ENCODE measurements at regions of chrX and their contacts with region 1.

Region 1: DNA sequence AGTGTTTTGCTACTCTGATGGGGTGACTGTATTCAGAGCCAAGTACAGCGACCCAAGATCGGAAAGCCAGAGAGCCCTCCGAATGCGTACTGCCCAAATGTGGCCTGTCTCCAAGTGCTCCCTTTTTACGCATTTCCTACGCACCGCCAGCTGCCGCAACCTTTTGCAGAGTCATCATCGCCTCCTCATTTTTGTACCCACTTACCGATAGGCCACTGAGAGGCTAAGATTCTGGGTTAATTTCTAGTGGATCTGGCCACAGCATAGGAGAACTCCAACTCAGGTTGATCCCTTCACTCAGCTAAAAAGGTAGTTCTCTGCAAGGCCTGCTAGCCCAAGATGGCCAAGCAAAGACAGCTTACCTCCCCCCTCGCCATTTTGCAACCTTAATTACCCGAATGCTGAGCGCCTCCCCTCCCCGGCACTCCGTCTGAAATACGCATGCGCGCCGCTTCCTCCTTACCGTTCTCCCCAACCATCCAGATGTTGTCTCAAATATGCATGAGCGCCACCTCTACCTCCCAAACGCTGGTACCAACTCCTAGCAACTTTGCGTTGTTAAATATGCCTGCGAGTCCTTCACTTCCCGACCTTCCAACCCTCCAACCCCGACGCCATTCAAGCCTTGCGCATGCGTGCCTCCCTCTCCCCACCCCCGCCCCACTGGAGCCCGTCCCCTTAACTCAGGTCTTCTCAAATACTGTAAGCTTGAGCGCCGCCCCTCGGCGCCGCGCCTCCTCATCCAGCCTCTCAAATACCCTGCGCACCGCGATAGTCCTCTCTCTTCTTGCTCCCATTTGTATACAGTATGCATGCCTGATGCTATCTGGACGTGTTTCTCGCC is 11.8 kb upstream of the ZCCHC13 start:
- DNase-seq: peak; percentile 89 to 95 (median 91)
- ATAC-seq: peak; percentile 90
- H3K4me3 ChIP-seq: peak overlapping the region; percentile 63
- H3K27ac ChIP-seq: peak overlapping the region; percentile 99
- H3K4me1 ChIP-seq: peaks cover 0 to 7% of the 10 kb centered on the region in 2 experiments; a peak in 2 of 5 replicates
- H3K27me3 ChIP-seq: no peaks in the 10 kb centered on the region
- CTCF ChIP-seq: peak; percentile 44 to 57 (median 48); a peak in 5 of 6 replicates
- EP300 ChIP-seq: no peak
- POLR2A ChIP-seq: peak; percentile 88
- RAD21 ChIP-seq: 0 out of 4 replicates have a peak, but pooled peaks of 1 of the 2 experiments have one; percentile 15

Region 2: GRCh38 chrX:74133156-74133796 is 158.9 kb before region 1 on chrX:
- CTCF ChIA-PET with region 1: no interaction called
- POLR2A ChIA-PET with region 1: no interaction called
- in situ Hi-C with region 1: no loop called
- intact Hi-C with region 1: loop called (anchors 1 kb)
- DNase-seq: peak; percentile 39 to 56 (median 46)
- ATAC-seq: peak; percentile 87
- H3K4me3 ChIP-seq: no peak overlapping the region
- H3K27ac ChIP-seq: no peak overlapping the region
- H3K4me1 ChIP-seq: no peaks in the 10 kb centered on the region
- H3K27me3 ChIP-seq: no peaks in the 10 kb centered on the region
- CTCF ChIP-seq: peak; percentile 58 to 77 (median 59)
- EP300 ChIP-seq: no peak
- POLR2A ChIP-seq: no peak
- RAD21 ChIP-seq: peak; percentile 70 to 87

Region 3: DNA sequence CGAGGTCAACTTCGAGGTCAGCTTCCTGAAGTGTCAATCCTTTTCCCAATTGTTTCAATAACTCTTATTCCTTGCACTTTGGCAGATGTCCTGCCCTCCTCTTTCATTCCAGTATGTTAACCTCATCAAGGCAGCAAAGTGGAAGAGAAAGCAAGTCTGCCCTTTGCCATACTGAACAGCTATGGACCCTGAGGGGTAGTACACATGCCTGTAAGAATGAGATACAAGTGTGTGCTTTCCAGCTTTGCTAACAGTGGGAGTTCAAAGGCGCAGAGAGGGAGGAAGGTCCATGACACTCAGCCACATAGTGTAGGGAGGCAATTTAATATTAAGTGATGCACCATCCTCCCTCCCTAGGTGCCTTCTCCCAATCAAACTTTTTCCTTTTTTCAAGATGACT is 84.6 kb before region 1 on chrX:
- CTCF ChIA-PET with region 1: no interaction called
- POLR2A ChIA-PET with region 1: no interaction called
- in situ Hi-C with region 1: no loop called
- intact Hi-C with region 1: no loop called
- DNase-seq: no peak
- ATAC-seq: no peak
- H3K4me3 ChIP-seq: no peak overlapping the region
- H3K27ac ChIP-seq: no peak overlapping the region
- H3K4me1 ChIP-seq: no peaks in the 10 kb centered on the region
- H3K27me3 ChIP-seq: no peaks in the 10 kb centered on the region
- CTCF ChIP-seq: no peak
- EP300 ChIP-seq: no peak
- POLR2A ChIP-seq: no peak
- RAD21 ChIP-seq: no peak

Region 4: DNA sequence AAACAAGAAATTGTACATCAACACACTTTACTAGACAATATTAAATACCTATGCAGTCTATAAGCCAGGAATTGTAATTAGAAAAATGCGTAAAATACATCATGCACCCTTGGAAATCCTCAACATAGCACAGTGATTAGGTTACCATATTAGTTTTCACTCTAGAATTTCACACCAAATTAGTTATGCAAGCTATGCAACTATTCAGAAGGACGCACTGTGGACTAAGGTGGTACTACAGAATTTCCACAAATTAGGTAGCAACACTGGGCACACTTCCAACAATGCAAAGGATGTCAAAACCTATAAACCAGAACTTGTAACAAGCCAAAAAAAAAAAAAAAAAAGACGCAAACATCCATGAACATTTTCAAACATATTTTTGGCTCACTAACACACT is 59.3 kb before region 1 on chrX:
- CTCF ChIA-PET with region 1: no interaction called
- POLR2A ChIA-PET with region 1: no interaction called
- in situ Hi-C with region 1: no loop called
- intact Hi-C with region 1: loop called (anchors 10 kb)
- DNase-seq: peak in 3 of 4 experiments; percentile 10 to 38 (median 17)
- ATAC-seq: peak; percentile 75
- H3K4me3 ChIP-seq: no peak overlapping the region
- H3K27ac ChIP-seq: no peak overlapping the region
- H3K4me1 ChIP-seq: no peaks in the 10 kb centered on the region
- H3K27me3 ChIP-seq: no peaks in the 10 kb centered on the region
- CTCF ChIP-seq: no peak
- EP300 ChIP-seq: no peak
- POLR2A ChIP-seq: no peak
- RAD21 ChIP-seq: no peak

Region 5: DNA sequence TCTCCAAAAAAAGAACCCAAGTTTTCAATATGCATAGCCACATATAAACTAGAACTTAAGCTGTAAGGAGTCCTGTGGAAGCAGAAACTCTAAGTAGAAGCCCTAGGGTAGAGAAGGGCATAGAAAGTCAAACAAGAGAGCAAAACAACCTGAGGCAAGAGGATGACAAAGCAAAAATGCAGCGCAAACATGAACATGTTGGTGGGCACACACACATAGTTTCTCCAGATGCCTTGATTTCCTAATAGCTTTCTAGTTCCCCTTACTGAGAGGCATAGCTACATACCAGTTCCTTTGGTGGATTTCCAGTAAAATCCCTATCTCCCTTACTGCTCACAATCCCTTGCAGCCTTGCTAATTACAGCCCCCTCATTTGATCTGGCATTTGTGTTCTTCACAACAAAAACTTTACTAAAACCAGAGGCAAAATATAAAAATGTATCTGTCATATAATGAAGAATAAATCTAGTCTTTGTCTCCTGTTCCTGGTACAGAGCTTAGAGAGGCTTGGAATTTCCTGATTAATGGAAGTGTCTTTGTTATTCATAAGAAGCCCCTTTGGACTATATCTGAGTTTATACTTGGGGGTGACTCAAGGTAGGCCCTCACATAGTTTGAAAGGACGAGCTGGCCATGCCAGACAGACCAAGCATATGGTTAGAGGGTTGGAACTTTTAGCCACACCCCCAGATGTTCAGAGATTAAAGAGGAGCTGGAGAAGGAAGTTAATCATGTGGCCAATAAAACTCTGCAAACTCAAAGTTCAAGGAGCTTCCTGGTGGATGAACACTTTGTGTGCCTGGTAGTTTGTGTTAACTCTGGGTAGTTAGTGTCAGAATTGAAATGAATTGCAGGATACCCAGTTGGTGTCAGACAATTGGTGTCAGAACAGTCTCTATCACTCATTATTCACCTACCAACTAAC is 40.9 kb before region 1 on chrX:
- CTCF ChIA-PET with region 1: no interaction called
- POLR2A ChIA-PET with region 1: no interaction called
- in situ Hi-C with region 1: no loop called
- intact Hi-C with region 1: loop called (anchors 2 kb)
- DNase-seq: peak in 2 of 4 experiments; percentile 6 to 27
- ATAC-seq: peak; percentile 60
- H3K4me3 ChIP-seq: no peak overlapping the region
- H3K27ac ChIP-seq: peak overlapping the region; percentile 50; the same call in 1 of the 3 replicates
- H3K4me1 ChIP-seq: peaks cover 4 to 14% of the 10 kb centered on the region in 2 experiments; a peak in 3 of 5 replicates
- H3K27me3 ChIP-seq: no peaks in the 10 kb centered on the region
- CTCF ChIP-seq: no peak
- EP300 ChIP-seq: no peak
- POLR2A ChIP-seq: no peak
- RAD21 ChIP-seq: no peak

Region 6: DNA sequence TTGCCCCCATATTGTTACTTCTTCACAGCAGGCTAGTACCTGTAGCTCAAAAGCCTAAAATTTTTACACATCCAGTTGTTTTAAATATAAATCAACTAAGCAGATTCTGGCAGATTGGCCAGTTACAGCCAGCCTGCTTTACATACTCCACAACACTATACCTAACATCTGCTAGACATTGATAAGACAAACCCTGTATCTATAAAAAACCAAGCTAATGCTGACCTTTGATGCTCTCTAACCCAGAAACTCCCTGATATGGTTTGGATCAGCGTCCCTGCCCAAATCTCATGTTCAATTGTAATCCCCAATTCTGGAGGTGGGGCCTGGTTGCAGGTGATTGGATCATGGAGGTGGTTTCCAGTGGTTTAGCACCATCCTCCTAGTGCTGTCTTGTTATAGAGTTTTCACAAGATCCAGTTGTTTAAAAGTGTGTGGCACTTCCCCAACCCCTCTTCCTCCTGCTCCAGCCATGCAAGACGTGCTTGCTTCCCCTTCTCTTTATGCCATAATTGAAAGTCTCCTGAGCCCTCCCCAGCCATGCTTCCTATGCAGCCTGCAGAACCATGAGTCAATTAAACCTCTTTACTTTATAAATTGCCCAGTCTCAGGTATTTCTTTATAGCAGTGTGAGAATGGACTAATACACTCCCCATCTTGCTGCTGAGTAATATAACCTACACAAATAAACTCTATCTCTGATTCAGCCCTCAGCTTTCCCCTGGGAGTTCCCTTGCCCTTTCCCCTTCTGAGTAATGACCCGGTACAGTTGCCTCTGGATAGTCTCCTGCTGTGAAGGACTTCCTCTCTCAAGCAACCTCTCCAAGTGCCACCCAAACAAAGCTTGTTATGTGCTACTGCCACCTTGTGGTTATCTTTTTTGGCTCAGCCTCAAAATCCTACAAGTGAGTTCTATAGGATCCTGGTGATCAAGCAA is 51.4 kb after region 1 on chrX:
- CTCF ChIA-PET with region 1: no interaction called
- POLR2A ChIA-PET with region 1: interaction called, 3 read pairs
- in situ Hi-C with region 1: no loop called
- intact Hi-C with region 1: loop called (anchors 5 kb)
- DNase-seq: peak; percentile 24 to 78 (median 40)
- ATAC-seq: peak; percentile 95
- H3K4me3 ChIP-seq: no peak overlapping the region
- H3K27ac ChIP-seq: no peak overlapping the region
- H3K4me1 ChIP-seq: peaks cover 0 to 4% of the 10 kb centered on the region in 2 experiments; a peak in 1 of 5 replicates
- H3K27me3 ChIP-seq: no peaks in the 10 kb centered on the region
- CTCF ChIP-seq: peak; percentile 52 to 64 (median 63); a peak in 5 of 6 replicates
- EP300 ChIP-seq: no peak
- POLR2A ChIP-seq: no peak
- RAD21 ChIP-seq: peak; percentile 48 to 75; a peak in 3 of 4 replicates

Measured in K562 (cell line).